ENCODE measurements at regions of chr17 and their contacts with region 1.

Region 1: GRCh38 chr17:43104665-43105064 is 20.5 kb downstream of the BRCA1 start:
- DNase-seq: no peak
- H3K4me3 ChIP-seq: no peak overlapping the region
- H3K27ac ChIP-seq: no peak overlapping the region
- H3K4me1 ChIP-seq: no peaks in the 10 kb centered on the region
- H3K27me3 ChIP-seq: no peaks in the 10 kb centered on the region
- CTCF ChIP-seq: no peak
- EP300 ChIP-seq: no peak
- POLR2A ChIP-seq: no peak

Region 2: DNA sequence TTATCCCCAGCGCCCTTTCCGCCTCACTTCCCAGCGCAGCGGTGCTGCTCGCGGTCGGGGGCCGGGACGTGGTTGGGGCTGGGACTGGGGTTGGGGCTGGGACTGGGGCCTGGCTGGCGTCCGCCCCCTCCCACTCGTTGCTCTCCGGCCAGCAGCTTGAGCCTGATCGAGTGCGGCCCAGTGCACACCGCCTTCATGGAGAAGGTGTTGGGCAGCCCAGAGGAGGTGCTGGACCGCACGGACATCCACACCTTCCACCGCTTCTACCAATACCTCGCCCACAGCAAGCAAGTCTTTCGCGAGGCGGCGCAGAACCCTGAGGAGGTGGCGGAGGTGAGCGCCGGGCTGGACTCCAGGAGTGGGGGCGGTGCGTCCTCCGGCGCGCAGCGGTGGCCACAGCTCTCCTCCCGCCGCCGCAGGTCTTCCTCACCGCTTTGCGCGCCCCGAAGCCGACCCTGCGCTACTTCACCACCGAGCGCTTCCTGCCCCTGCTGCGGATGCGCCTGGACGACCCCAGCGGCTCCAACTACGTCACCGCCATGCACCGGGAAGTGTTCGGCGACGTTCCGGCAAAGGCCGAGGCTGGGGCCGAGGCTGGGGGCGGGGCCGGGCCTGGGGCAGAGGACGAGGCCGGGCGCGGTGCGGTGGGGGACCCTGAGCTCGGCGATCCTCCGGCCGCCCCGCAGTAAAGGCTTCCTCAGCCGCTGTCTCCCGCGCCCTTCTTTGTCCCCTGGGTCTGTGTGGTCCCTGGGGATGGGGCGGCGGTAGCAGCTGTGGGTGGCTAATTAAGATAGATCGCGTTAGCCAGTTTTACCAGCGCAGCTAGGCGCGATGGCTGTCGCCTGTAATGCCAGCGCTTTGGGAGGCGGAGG is 550.2 kb before region 1 on chr17:
- intact Hi-C with region 1: no loop called
- DNase-seq: peak; percentile 88 to 97
- H3K4me3 ChIP-seq: peak overlapping the region; percentile 66 to 86 (median 76)
- H3K27ac ChIP-seq: peak overlapping the region; percentile 88 to 93 (median 91)
- H3K4me1 ChIP-seq: peaks cover 19 to 40% (median 34%) of the 10 kb centered on the region in 4 donors
- H3K27me3 ChIP-seq: no peaks in the 10 kb centered on the region
- CTCF ChIP-seq: no peak
- EP300 ChIP-seq: no peak
- POLR2A ChIP-seq: peak in 2 of 4 donors; percentile 65 to 68

Region 3: GRCh38 chr17:42819944-42820535 is 284.6 kb before region 1 on chr17:
- intact Hi-C with region 1: no loop called
- DNase-seq: peak; percentile 71 to 81
- H3K4me3 ChIP-seq: no peak overlapping the region
- H3K27ac ChIP-seq: no peak overlapping the region
- H3K4me1 ChIP-seq: peaks cover 12 to 45% (median 29%) of the 10 kb centered on the region in 4 donors
- H3K27me3 ChIP-seq: no peaks in the 10 kb centered on the region
- CTCF ChIP-seq: peak in 4 of 7 experiments; percentile 30 to 58 (median 46)
- EP300 ChIP-seq: no peak
- POLR2A ChIP-seq: no peak

Region 4: DNA sequence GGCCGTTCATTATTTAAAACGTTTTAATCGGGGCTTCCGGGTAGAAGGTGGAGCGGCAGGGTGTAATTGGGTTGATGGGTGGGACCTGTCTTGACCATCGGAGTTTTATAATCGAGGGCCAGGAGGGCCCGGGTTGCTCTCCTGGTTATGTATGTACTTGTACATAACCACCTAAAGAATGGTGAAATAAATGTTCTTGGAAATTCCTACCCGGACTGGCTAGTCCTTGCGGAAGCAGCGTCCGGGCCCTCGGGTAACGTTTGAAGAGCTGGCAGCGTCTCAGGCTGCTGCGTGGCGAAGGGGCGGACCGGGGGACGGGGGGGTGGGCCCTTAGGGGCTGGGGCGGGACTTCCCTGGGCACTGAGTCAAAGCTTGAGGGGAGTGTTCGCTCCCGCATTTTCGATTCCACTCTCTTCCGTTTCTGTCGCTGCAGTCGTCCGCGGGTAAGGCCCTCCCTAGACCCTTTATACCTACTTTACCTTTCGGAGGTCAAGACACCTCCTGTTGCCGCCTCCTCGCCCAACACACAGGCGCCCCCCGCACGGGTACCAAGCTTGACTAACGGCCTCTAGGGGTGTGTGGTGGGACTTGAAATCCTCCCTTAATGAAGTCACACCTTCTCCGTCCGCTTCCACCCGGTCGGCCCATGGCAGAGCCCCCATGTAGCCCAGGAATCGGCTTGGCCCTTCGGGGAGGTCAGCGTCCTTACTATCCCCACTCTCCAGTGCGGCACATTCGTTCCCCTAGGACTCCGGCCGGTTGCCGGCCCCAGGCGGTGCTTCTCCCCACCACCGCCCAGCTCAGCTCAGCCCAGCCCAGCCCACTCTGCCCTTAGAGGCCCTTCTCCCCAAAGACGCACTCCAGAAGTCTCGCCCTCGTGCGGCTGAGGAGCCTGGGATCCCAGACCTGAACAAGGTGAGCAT is 107.1 kb after region 1 on chr17 and contains the start of gene TMEM106A:
- intact Hi-C with region 1: loop called (anchors 10 kb)
- DNase-seq: peak; percentile 82 to 95
- H3K4me3 ChIP-seq: peak within 1 kb of the TSS; percentile 58 to 70 (median 60)
- H3K27ac ChIP-seq: peak within 1 kb of the TSS; percentile 81 to 91 (median 87)
- H3K4me1 ChIP-seq: peaks cover 17 to 35% (median 29%) of the 10 kb centered on the region in 4 donors
- H3K27me3 ChIP-seq: no peaks in the 10 kb centered on the region
- CTCF ChIP-seq: peak in 1 of 7 experiments; percentile 28
- EP300 ChIP-seq: no peak
- POLR2A ChIP-seq: no peak
- total RNA-seq, gene TMEM106A: 4.0 to 82.3 (median 28.2) TPM in 4 of 5 donors, not detected in the other